Heart left ventricle (tissue), 16 donors: ENCODE measurements at regions of chr20 and their contacts with region 1.

Region 1: DNA sequence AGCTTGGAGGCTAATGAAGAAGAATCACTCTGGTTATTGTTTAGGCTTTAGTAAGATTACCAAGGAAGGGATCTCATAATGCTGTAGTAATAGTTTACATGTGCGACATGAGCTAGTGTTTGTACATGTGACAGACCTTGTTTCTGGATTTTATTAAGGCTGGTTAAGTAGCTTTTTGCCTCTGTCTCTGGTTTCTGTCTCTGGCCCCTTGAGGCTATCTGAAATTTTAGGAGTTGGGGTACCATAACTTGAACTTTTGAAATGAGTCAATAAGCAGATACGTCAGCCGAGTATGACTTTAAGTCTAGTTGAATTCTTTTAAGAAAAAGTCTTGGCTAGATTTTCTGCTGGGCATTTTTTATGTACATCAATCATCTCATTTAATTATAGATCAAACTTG is 9.5 kb downstream of the CBFA2T2 start:
- DNase-seq: no peak
- ATAC-seq: no peak
- H3K4me3 ChIP-seq: no peak overlapping the region
- H3K27ac ChIP-seq: peak overlapping the region in 1 of 12 donors; percentile 2
- H3K4me1 ChIP-seq: peaks cover 0 to 25% (median 15%) of the 10 kb centered on the region in 12 donors
- H3K27me3 ChIP-seq: no peaks in the 10 kb centered on the region
- CTCF ChIP-seq: no peak
- POLR2A ChIP-seq: no peak

Region 2: DNA sequence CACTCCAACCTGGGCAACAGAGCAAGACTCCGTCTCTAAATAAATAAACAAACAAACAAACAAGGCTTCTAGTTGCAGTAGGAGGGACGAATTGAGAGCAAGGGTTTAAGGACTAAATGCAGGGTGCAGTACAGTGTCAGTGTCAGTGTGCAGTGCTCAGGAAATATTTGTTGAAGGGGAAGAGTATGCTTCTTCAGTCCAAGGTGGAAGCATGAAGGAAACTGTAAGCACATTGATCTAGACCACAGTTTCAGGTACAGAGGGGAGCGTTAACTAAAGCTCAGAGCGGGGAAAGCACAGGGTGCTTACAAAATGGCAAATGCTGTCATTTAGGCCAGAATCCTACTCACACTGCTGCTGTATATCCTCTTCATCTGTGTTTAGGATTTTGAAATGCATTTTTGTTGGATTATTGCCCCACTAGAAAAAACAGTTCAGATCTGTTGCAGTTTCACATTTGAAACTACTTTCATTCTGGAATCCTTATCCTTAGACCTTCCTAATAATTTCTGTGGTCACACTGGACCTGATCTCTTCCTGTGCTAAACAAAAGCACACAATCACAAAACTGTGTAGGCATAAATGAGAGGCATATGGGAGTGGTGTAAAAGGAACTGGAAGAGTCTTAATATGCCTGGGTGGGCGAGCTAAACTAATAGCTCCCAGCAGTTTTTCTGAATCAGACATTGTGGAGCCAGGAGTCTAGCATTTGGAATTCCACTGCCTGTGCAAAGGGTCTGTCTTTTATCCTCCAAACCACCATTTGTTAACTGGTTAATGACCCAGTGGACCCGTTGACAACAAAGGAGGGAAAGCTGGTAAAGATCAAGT is 31.9 kb after region 1 on chr20:
- intact Hi-C with region 1: loop called in 1 of 10 experiments (anchors 5 kb)
- DNase-seq: no peak
- ATAC-seq: peak in 1 of 4 donors; percentile 57
- H3K4me3 ChIP-seq: no peak overlapping the region
- H3K27ac ChIP-seq: peak overlapping the region in 6 of 12 donors; percentile 4 to 52 (median 26)
- H3K4me1 ChIP-seq: peaks cover 0 to 30% (median 22%) of the 10 kb centered on the region in 12 donors
- H3K27me3 ChIP-seq: no peaks in the 10 kb centered on the region
- CTCF ChIP-seq: no peak
- POLR2A ChIP-seq: no peak